Activated B cell treated with CpG ODN at 0.5 μM for 24 hours (primary cell): ENCODE measurements at regions of chr17 and their contacts with region 1.

Region 1: GRCh38 chr17:59220376-59221158 is at the start of gene GDPD1:
- DNase-seq: peak; percentile 95
- ATAC-seq: peak; percentile 99
- H3K4me3 Mint-ChIP-seq: peak within 1 kb of the TSS; percentile 94
- H3K27ac Mint-ChIP-seq: peak within 1 kb of the TSS; percentile 85
- H3K4me1 Mint-ChIP-seq: peaks cover 13% of the 10 kb centered on the region
- H3K27me3 Mint-ChIP-seq: no peaks in the 10 kb centered on the region
- CTCF ChIP-seq: no peak
- total RNA-seq, gene GDPD1: 0.71 and 1.2 TPM in 2 replicates

Region 2: GRCh38 chr17:59106463-59107305 is 113.9 kb before region 1 on chr17 and contains the start of gene TRIM37:
- CTCF ChIA-PET with region 1: no interaction called
- POLR2A ChIA-PET with region 1: no interaction called
- intact Hi-C with region 1: loop called (anchors 5 kb)
- DNase-seq: peak; percentile 98
- ATAC-seq: peak; percentile 96
- H3K4me3 Mint-ChIP-seq: peak within 1 kb of the TSS; percentile 94
- H3K27ac Mint-ChIP-seq: peak within 1 kb of the TSS; percentile 82
- H3K4me1 Mint-ChIP-seq: peaks cover 28% of the 10 kb centered on the region
- H3K27me3 Mint-ChIP-seq: no peaks in the 10 kb centered on the region
- CTCF ChIP-seq: no peak
- total RNA-seq, gene TRIM37: 16.4 and 17.3 TPM in 2 replicates

Region 3: DNA sequence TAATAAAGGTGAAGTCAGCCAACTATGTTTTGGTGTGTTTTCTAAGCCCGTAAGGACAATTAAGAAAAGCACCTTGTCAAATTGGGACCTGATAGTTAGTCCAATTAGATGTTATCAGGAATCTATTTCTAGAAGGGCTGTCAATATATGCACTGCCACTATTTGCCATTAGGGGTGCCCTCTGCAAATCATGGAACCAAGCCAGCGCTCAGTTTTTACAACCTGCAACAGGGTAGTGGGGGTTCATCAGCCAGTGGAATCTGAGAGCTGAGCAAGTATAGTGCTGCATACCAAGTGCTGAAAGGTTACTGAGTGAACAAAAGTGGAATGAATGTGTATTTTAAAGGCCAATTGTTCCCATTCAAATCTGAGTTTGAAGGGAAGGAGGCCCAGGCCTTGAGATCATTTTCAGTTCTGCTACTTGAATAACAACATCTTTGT is 54.6 kb before region 1 on chr17:
- CTCF ChIA-PET with region 1: no interaction called
- POLR2A ChIA-PET with region 1: no interaction called
- intact Hi-C with region 1: loop called (anchors 2 kb)
- DNase-seq: no peak
- ATAC-seq: peak; percentile 86
- H3K4me3 Mint-ChIP-seq: peak overlapping the region; percentile 48
- H3K27ac Mint-ChIP-seq: peak overlapping the region; percentile 80
- H3K4me1 Mint-ChIP-seq: peaks cover 13% of the 10 kb centered on the region
- H3K27me3 Mint-ChIP-seq: no peaks in the 10 kb centered on the region
- CTCF ChIP-seq: no peak

Region 4: DNA sequence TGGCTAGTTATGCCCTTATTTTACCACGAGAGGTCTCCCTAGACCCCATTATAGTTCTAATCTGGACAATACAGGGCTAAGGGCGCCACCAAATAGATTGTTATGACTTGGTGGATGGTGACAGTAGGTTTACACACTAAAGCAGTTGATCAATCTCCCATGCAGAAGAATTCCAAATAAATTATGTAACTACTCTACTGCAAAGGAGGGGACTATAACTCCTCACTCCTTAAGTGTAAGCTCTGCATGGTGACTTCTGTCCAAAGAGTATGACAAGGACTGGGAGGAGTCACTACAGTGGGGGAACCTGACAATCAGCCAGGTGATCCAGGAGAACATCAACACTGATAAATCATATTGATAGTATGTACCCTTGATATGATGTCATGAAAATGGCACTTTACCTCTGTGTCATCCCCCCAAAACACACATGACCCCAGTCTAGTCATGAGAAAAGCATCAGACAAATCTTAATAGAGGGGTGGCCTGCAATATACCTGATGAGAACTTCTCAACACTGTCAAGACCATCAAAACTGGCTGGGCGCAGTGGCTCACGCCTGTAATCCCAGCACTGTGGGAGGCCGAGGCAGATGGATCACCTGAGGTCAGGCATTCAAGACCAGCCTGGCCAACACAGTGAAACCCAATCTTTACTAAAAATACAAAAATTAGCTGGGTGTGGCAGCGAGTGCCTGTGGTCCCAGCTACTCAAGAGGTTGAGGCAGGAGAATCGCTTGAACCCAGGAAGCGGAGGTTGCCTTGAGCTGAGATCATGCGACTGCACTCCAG is 90.8 kb after region 1 on chr17:
- CTCF ChIA-PET with region 1: no interaction called
- POLR2A ChIA-PET with region 1: no interaction called
- intact Hi-C with region 1: loop called (anchors 2 kb)
- DNase-seq: no peak
- ATAC-seq: peak; percentile 99
- H3K4me3 Mint-ChIP-seq: no peak overlapping the region
- H3K27ac Mint-ChIP-seq: no peak overlapping the region
- H3K4me1 Mint-ChIP-seq: no peaks in the 10 kb centered on the region
- H3K27me3 Mint-ChIP-seq: no peaks in the 10 kb centered on the region
- CTCF ChIP-seq: peak; percentile 86

Region 5: GRCh38 chr17:60392042-60392844 is 1171.7 kb after region 1 on chr17 and contains the start of gene USP32:
- CTCF ChIA-PET with region 1: no interaction called
- POLR2A ChIA-PET with region 1: no interaction called
- intact Hi-C with region 1: loop called (anchors 10 kb)
- DNase-seq: peak; percentile 94
- ATAC-seq: peak; percentile 88
- H3K4me3 Mint-ChIP-seq: peak within 1 kb of the TSS; percentile 97
- H3K27ac Mint-ChIP-seq: peak within 1 kb of the TSS; percentile 96
- H3K4me1 Mint-ChIP-seq: peaks cover 66% of the 10 kb centered on the region
- H3K27me3 Mint-ChIP-seq: no peaks in the 10 kb centered on the region
- CTCF ChIP-seq: no peak
- total RNA-seq, gene USP32: 48.9 and 59.2 TPM in 2 replicates